ENCODE measurements at regions of chr7 and their contacts with region 1.

Region 1: GRCh38 chr7:92904292-92905131 is 68.1 kb upstream of the CDK6 start:
- DNase-seq: peak; percentile 94
- ATAC-seq: peak; percentile 96
- H3K4me3 Mint-ChIP-seq: peak overlapping the region; percentile 19
- H3K27ac Mint-ChIP-seq: peak overlapping the region; percentile 89
- H3K4me1 Mint-ChIP-seq: peaks cover 30% of the 10 kb centered on the region
- H3K27me3 Mint-ChIP-seq: peaks cover 4% of the 10 kb centered on the region

Region 2: DNA sequence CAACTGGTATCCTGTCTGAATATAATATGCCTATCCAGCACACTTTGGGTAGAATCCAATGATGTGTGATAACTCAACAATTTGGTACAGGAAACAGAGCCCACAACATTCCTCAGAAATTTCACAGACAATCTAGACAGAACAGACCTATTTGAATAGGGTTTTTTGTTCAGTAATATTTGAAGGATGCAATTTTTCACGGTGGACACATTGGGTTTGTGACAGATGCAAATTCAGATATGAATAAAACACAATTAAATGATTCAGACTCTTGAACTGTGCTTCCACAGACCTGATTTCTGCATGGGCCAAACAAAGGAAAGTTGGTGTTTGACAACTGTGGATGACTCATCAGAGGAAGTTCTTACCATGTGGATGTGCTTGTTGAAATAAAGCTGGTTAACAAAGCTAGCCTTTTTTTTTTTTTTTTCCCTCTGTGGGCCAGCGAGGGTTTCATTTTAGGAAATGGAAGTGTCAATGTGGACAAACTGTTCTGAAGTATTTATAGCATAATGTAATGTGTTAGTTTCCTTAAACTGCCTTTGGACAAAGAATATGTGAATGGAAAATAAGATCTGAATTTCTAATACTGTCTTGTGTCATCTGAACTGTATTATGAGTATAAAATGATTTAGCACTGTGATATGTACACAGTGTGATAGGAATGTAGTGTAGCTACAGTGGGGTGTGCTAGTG is 271.2 kb before region 1 on chr7:
- CTCF ChIA-PET with region 1: interaction called, 7 read pairs
- POLR2A ChIA-PET with region 1: no interaction called
- intact Hi-C with region 1: loop called (anchors 1 kb)
- DNase-seq: peak; percentile 46
- ATAC-seq: peak; percentile 34
- H3K4me3 Mint-ChIP-seq: peak overlapping the region; percentile 48
- H3K27ac Mint-ChIP-seq: peak overlapping the region; percentile 89
- H3K4me1 Mint-ChIP-seq: peaks cover 82% of the 10 kb centered on the region
- H3K27me3 Mint-ChIP-seq: no peaks in the 10 kb centered on the region

Region 3: DNA sequence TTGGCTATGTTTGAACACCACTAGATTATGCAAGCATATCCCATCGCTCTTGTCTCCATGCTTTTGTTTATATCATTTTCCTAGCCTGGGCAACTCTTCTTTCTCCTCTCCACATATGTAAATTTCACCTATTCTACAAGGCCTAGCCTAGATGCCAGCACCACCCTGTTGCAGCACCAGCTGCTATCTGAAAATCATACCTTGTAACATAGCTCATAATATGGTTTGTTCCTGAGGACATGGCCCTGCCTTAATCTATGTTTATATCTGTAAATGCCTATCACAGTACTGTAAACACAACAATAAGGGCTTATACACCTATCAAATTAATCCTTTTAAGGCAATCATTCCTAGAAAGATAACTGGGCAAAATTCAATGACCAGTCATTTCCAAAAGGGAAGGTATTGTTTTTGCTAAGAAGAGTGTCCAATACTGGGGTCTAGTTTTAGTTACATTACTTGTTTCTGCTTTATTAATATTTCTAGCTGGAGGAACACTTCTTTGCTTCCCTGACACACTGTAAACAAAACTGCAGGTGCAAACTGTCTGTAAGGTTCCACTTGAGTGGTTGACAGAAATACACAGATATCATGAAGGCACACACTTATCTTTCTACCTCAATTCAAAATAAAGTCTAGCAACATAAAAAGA is 230.3 kb before region 1 on chr7:
- CTCF ChIA-PET with region 1: no interaction called
- POLR2A ChIA-PET with region 1: no interaction called
- intact Hi-C with region 1: no loop called
- DNase-seq: no peak
- ATAC-seq: no peak
- H3K4me3 Mint-ChIP-seq: no peak overlapping the region
- H3K27ac Mint-ChIP-seq: no peak overlapping the region
- H3K4me1 Mint-ChIP-seq: peaks cover 39% of the 10 kb centered on the region
- H3K27me3 Mint-ChIP-seq: no peaks in the 10 kb centered on the region

Region 4: GRCh38 chr7:92691578-92691977 is 212.9 kb before region 1 on chr7:
- CTCF ChIA-PET with region 1: interaction called, 3 read pairs
- POLR2A ChIA-PET with region 1: no interaction called
- intact Hi-C with region 1: loop called in 1 of 2 experiments (anchors 5 kb)
- DNase-seq: no peak
- ATAC-seq: peak; percentile 88
- H3K4me3 Mint-ChIP-seq: no peak overlapping the region
- H3K27ac Mint-ChIP-seq: peak overlapping the region; percentile 73
- H3K4me1 Mint-ChIP-seq: peaks cover 47% of the 10 kb centered on the region
- H3K27me3 Mint-ChIP-seq: no peaks in the 10 kb centered on the region

Region 5: DNA sequence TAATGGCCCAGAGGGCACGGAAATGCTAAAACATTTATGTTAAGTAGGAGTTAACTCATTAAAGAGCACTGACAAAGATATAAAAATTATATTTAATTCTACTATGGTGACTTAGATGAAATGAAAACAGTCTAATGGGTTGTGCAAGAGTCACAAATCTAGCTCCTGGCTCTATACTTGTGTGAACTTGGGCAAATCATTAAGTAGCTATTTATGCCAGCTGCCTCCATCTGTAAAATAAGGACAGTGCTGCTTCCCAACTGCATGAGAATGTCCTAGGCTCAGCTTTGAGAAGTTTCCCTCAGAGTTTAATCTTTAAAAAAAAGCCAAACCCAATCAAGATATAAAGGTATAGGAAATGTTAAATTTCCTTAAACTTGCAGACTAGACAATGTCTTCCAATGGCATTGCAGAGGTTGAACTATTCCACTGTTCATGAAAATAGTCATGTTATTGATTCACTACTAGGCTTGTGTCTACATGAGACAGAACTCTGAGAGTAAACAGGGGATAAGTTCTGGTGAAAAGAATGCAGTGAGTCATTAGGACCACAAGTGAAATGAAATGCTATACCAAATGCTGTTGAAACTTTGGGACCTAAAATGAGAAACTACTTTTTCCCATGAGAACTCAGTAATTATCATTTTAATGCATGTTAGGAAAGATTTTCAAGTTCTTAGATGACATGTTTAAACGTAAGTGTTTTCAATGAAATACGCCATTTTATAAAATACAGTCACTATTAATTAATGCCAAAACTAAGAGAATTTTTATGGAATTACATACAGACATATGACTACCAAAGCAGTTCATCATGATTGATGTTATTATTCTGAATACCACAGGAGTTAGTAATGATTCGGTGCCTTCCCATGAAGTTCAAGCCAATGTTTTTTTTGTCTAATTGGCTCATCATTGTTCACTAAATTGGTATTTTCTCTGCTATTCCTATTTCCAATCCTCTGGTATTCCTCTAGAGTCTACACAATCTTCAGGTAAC is 152.3 kb before region 1 on chr7:
- CTCF ChIA-PET with region 1: no interaction called
- POLR2A ChIA-PET with region 1: no interaction called
- intact Hi-C with region 1: loop called in 1 of 2 experiments (anchors 1 kb)
- DNase-seq: no peak
- ATAC-seq: peak; percentile 75
- H3K4me3 Mint-ChIP-seq: no peak overlapping the region
- H3K27ac Mint-ChIP-seq: peak overlapping the region; percentile 68
- H3K4me1 Mint-ChIP-seq: peaks cover 66% of the 10 kb centered on the region
- H3K27me3 Mint-ChIP-seq: no peaks in the 10 kb centered on the region

Region 6: GRCh38 chr7:92854501-92855238 is 49.8 kb before region 1 on chr7:
- CTCF ChIA-PET with region 1: interaction called, 4 read pairs
- POLR2A ChIA-PET with region 1: no interaction called
- intact Hi-C with region 1: loop called (anchors 1 kb)
- DNase-seq: peak; percentile 47
- ATAC-seq: peak; percentile 91
- H3K4me3 Mint-ChIP-seq: no peak overlapping the region
- H3K27ac Mint-ChIP-seq: peak overlapping the region; percentile 69
- H3K4me1 Mint-ChIP-seq: peaks cover 16% of the 10 kb centered on the region
- H3K27me3 Mint-ChIP-seq: peaks cover 6% of the 10 kb centered on the region

Region 7: GRCh38 chr7:92955109-92955508 is 50.6 kb after region 1 on chr7:
- CTCF ChIA-PET with region 1: interaction called, 3 read pairs
- POLR2A ChIA-PET with region 1: interaction called, 4 read pairs
- intact Hi-C with region 1: loop called (anchors 1 kb)
- DNase-seq: peak; percentile 61
- ATAC-seq: peak; percentile 65
- H3K4me3 Mint-ChIP-seq: no peak overlapping the region
- H3K27ac Mint-ChIP-seq: peak overlapping the region; percentile 64
- H3K4me1 Mint-ChIP-seq: peaks cover 30% of the 10 kb centered on the region
- H3K27me3 Mint-ChIP-seq: peaks cover 20% of the 10 kb centered on the region

Region 8: DNA sequence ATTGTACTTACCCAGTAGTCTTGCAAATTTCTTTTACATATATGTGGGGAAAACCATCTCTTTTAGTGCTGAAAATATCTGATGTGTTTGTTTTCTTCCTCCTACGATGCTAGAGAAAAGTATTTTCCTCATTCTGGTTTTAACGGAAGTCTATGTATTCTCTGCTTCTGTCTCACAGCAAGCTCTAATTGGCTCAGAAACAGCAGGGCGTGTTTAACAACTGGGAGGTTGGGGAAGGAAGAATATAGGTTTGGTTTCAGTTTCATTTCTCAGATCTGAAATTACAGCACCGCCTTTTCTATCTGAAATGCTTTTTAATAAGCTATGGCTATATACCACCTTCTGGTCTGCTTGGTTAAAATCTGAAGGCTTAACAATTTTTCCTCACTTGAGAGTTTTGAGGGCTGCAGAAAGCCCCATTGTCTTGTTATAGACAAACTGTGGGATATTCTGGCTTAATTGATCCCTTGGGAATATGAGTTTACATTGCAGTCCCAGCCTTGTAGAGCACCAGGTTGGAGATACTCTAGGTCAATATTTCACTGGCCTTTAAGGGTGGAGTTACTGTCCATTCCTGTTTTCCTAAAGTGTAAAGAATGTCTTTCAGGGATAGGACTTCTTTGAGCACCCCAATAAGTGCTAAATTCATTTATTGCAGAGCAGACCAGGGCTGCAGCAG is 213.5 kb after region 1 on chr7 and contains the start of gene SAMD9:
- CTCF ChIA-PET with region 1: no interaction called
- POLR2A ChIA-PET with region 1: no interaction called
- intact Hi-C with region 1: loop called in 1 of 2 experiments (anchors 1 kb)
- DNase-seq: peak; percentile 65
- ATAC-seq: peak; percentile 89
- H3K4me3 Mint-ChIP-seq: peak within 1 kb of the TSS; percentile 78
- H3K27ac Mint-ChIP-seq: peak within 1 kb of the TSS; percentile 88
- H3K4me1 Mint-ChIP-seq: peaks cover 49% of the 10 kb centered on the region
- H3K27me3 Mint-ChIP-seq: no peaks in the 10 kb centered on the region
- total RNA-seq, gene SAMD9: 10.2 to 10.7 TPM

Region 9: DNA sequence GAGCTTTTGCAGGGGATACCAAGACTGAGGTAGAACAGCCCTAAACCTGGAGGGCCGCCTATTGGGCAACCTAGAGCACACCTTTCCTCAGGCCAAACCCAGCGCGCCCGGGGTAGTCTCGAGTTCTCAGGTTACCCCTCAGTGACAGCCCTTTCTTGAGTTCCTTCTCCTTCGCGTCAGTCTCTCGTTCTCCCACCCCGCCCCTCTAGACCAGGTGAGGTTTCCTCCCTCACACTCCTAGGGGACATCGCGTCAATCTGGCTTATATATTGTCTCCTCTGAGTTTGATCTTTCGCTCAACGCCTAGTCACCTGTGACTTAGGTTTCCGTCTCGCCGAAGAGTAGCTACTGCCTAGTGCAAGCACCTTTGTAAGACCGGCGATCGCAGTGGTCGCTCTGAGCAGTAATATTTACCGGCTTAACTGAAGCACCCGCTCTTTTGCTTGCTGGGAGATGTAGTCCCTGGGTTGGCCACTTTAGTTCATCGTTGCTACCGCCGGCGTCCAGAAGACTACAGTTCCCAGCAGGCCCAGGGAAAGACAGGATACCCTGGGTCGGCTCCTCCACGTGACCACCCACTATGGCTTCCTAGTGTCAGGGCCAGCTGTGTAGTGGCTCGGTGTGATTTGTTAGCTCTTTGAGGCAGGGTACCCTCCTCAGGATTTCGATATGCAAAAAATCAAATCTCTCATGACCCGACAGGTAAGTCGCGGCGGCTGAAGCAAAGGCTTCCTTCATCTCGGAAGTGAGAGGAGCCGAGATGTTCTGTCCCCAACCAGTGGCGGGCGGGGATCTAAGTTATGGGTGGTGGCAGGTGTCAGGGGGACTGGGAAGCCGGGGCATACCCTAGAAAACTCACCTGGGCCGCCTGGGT is 327.5 kb after region 1 on chr7 and contains the start of gene VPS50:
- CTCF ChIA-PET with region 1: no interaction called
- POLR2A ChIA-PET with region 1: no interaction called
- intact Hi-C with region 1: no loop called
- DNase-seq: peak; percentile 96
- ATAC-seq: peak; percentile 99
- H3K4me3 Mint-ChIP-seq: peak within 1 kb of the TSS; percentile 85
- H3K27ac Mint-ChIP-seq: peak within 1 kb of the TSS; percentile 88
- H3K4me1 Mint-ChIP-seq: peaks cover 10% of the 10 kb centered on the region
- H3K27me3 Mint-ChIP-seq: no peaks in the 10 kb centered on the region
- total RNA-seq, gene VPS50: 12.8 to 14.7 TPM

Measured in activated CD4-positive, alpha-beta T cell treated with anti-CD3 and anti-CD28 coated beads for 36 hours (primary cell).